CD8-positive, alpha-beta T cell (primary cell): ENCODE measurements at regions of chr13 and their contacts with region 1.

Region 1: DNA sequence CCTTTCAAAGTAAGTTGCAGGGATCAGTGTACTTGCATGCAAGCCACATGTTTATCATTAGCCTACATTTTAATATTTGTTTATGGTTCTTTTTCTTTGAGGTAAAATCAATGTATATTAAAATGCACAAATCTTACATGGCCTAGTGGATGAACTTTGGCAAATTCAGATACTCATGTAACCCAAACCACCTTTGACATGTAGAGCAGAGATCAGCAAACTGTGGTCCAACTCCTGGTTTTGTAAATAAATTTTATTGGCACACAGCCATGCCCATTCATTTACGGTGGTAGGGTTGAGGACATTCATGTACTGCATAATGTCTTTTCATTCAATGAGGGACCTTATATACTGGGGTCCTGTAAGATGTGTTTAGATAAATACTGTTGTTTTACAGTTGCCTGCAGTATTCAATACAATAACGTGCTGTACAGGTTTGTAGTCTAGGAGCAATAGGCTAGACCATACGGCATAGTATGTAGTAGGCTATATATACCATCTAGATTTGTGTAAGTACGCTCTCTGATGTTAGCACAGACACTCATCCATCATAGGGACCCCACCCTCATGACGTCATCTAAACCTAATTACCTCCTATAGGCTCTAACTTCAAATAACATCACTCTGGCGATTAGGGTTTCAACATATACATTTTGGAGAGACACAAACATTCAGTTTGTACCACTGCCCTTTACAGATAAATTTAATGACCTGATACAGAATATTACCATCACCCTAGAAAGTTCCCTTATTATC is 5.7 kb downstream of the NDFIP2 start:
- DNase-seq: no peak
- ATAC-seq: no peak
- H3K4me3 ChIP-seq: no peak overlapping the region
- H3K4me3 Mint-ChIP-seq: no peak overlapping the region
- H3K27ac ChIP-seq: no peak overlapping the region
- H3K27ac Mint-ChIP-seq: no peak overlapping the region
- H3K4me1 ChIP-seq: peaks cover 14% of the 10 kb centered on the region
- H3K4me1 Mint-ChIP-seq: peaks cover 16% of the 10 kb centered on the region
- H3K27me3 ChIP-seq: no peaks in the 10 kb centered on the region
- H3K27me3 Mint-ChIP-seq: no peaks in the 10 kb centered on the region
- CTCF ChIP-seq: no peak

Region 2: DNA sequence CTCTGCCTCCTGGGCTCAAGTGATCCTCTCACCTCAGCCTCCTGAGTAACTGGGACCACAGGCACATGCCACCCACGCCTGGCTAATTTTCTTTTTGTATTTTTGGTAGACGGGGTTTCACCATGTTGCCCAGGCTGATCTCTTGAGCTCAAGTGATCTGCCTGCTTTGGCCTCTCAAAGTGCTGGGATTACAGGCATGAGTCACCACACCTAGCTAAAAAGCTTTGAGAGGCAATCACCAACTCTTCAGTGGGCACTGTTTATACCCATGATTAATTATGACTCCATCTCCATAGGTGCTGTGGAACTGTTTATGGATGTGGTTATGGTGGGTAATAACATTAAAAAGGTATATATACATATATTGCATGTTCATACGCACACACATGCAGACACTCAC is 73.1 kb before region 1 on chr13:
- CTCF ChIA-PET with region 1: no interaction called
- POLR2A ChIA-PET with region 1: no interaction called
- intact Hi-C with region 1: loop called in 1 of 2 experiments (anchors 2 kb)
- DNase-seq: no peak
- ATAC-seq: no peak
- H3K4me3 ChIP-seq: no peak overlapping the region
- H3K4me3 Mint-ChIP-seq: no peak overlapping the region
- H3K27ac ChIP-seq: no peak overlapping the region
- H3K27ac Mint-ChIP-seq: no peak overlapping the region
- H3K4me1 ChIP-seq: no peaks in the 10 kb centered on the region
- H3K4me1 Mint-ChIP-seq: peaks cover 2% of the 10 kb centered on the region
- H3K27me3 ChIP-seq: no peaks in the 10 kb centered on the region
- H3K27me3 Mint-ChIP-seq: no peaks in the 10 kb centered on the region
- CTCF ChIP-seq: no peak

Region 3: GRCh38 chr13:79470666-79471065 is 15.9 kb before region 1 on chr13:
- CTCF ChIA-PET with region 1: interaction called, 4 read pairs
- POLR2A ChIA-PET with region 1: interaction called, 4 read pairs
- intact Hi-C with region 1: loop called in 1 of 2 experiments (anchors 2 kb)
- DNase-seq: no peak
- ATAC-seq: no peak
- H3K4me3 ChIP-seq: no peak overlapping the region
- H3K4me3 Mint-ChIP-seq: no peak overlapping the region
- H3K27ac ChIP-seq: no peak overlapping the region
- H3K27ac Mint-ChIP-seq: no peak overlapping the region
- H3K4me1 ChIP-seq: no peaks in the 10 kb centered on the region
- H3K4me1 Mint-ChIP-seq: no peaks in the 10 kb centered on the region
- H3K27me3 ChIP-seq: no peaks in the 10 kb centered on the region
- H3K27me3 Mint-ChIP-seq: peaks cover 2% of the 10 kb centered on the region
- CTCF ChIP-seq: no peak